ENCODE measurements at regions of chr10 and their contacts with region 1.

Region 1: DNA sequence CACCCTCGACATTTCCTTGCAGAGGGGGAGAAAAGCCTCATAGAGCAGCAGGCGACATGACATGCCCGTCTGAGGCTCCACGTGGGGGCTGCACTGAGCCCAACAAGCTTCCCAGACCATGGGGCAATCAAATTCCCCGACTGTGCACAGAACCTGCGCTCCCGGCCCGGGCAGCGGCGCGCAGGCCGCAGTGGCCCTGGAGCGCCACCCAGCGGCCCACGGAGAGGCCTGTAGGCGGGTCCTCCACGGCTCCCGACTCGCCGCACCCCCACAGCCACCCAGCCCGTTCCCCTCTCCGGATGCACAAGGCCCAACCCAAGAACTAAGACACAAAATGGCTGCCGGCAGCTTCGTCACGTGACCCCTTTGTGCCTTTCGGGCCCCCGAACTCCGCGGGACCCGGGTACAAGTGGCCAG is 816 bp downstream of the EPC1 start:
- DNase-seq: peak; percentile 97 to 98 (median 97)
- ATAC-seq: peak; percentile 96 to 98 (median 97)
- H3K4me3 ChIP-seq: peak overlapping the region; percentile 64 to 100 (median 88)
- H3K27ac ChIP-seq: peak overlapping the region; percentile 98 to 100 (median 100)
- H3K4me1 ChIP-seq: peaks cover 3 to 73% (median 55%) of the 10 kb centered on the region in 12 donors
- H3K27me3 ChIP-seq: no peaks in the 10 kb centered on the region
- CTCF ChIP-seq: peak; percentile 96 to 99 (median 98)
- POLR2A ChIP-seq: no peak

Region 2: GRCh38 chr10:32055813-32056600 is 290.1 kb before region 1 on chr10 and contains the start of gene KIF5B:
- intact Hi-C with region 1: loop called in 1 of 10 experiments (anchors 10 kb)
- DNase-seq: peak; percentile 90 to 97 (median 92)
- ATAC-seq: peak; percentile 83 to 96 (median 94)
- H3K4me3 ChIP-seq: peak within 1 kb of the TSS; percentile 61 to 95 (median 89)
- H3K27ac ChIP-seq: peak within 1 kb of the TSS; percentile 93 to 100 (median 98)
- H3K4me1 ChIP-seq: peaks cover 0 to 46% (median 32%) of the 10 kb centered on the region in 12 donors
- H3K27me3 ChIP-seq: no peaks in the 10 kb centered on the region
- CTCF ChIP-seq: peak in 3 of 12 donors; percentile 7 to 14 (median 8)
- POLR2A ChIP-seq: peak; percentile 91 to 97
- total RNA-seq, gene KIF5B: 108 to 178 (median 150) TPM

Region 3: DNA sequence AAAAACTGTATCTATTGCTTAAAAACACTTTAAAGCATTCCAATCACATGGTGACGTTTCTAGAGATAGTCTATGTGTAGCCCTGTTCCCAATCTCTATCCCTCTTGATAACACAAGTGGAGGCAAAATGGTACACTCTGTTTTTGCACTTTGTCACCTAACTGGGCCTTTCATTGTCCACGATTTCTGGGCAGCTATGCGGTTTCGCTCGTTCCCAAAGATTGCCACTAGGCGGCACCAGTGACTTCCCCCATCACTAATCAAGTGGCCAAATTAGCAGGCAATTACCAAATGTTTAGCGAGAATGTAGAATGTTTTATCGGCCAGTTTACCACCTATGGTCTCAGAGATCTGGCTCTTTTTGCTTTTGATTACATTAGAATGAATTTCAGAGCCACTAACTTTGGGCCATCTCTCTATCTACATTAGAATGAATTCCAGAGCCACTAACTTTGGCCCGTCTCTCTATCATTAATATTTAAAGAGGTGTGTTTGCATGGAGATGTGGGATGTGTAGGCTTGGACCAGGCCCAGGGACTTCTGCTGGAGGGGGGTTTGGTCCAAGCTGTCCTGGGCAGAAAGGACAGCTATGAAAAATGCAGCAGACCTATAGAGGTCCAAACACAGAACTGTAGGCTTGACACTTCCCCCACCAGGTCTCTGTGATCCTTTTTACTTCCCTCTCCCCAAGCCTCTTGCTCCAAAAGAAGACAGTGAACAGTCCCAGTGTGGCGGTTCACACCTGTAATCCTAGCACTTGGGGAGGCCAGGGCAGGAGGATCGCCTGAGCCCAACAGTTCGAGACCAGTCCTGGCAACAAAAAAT is 89.3 kb before region 1 on chr10:
- intact Hi-C with region 1: loop called (anchors 1 to 5 kb)
- DNase-seq: peak; percentile 44 to 76 (median 58)
- ATAC-seq: peak; percentile 37 to 83 (median 68)
- H3K4me3 ChIP-seq: peak overlapping the region in 1 of 12 donors; percentile 20
- H3K27ac ChIP-seq: no peak overlapping the region
- H3K4me1 ChIP-seq: peaks cover 0 to 8% (median 0%) of the 10 kb centered on the region in 12 donors
- H3K27me3 ChIP-seq: no peaks in the 10 kb centered on the region
- CTCF ChIP-seq: peak; percentile 83 to 94 (median 87)
- POLR2A ChIP-seq: no peak

Region 4: GRCh38 chr10:32308027-32308603 is 38.0 kb before region 1 on chr10:
- intact Hi-C with region 1: loop called in 2 of 10 experiments (anchors 5 kb)
- DNase-seq: no peak
- ATAC-seq: no peak
- H3K4me3 ChIP-seq: no peak overlapping the region
- H3K27ac ChIP-seq: no peak overlapping the region
- H3K4me1 ChIP-seq: peaks cover 7 to 71% (median 49%) of the 10 kb centered on the region in 12 donors
- H3K27me3 ChIP-seq: no peaks in the 10 kb centered on the region
- CTCF ChIP-seq: no peak
- POLR2A ChIP-seq: no peak

Region 5: GRCh38 chr10:32367793-32368453 is 21.8 kb after region 1 on chr10:
- intact Hi-C with region 1: loop called in 2 of 10 experiments (anchors 2 kb)
- DNase-seq: peak; percentile 62 to 80 (median 69)
- ATAC-seq: peak in 3 of 4 donors; percentile 38 to 53 (median 40)
- H3K4me3 ChIP-seq: peak overlapping the region in 7 of 12 donors; percentile 3 to 43 (median 26)
- H3K27ac ChIP-seq: peak overlapping the region in 7 of 12 donors; percentile 13 to 73 (median 28)
- H3K4me1 ChIP-seq: peaks cover 0 to 64% (median 33%) of the 10 kb centered on the region in 12 donors
- H3K27me3 ChIP-seq: no peaks in the 10 kb centered on the region
- CTCF ChIP-seq: peak; percentile 66 to 88 (median 80)
- POLR2A ChIP-seq: no peak

Region 6: GRCh38 chr10:32445740-32446535 is 99.8 kb after region 1 on chr10 and contains the start of gene CCDC7:
- intact Hi-C with region 1: loop called in 1 of 10 experiments (anchors 1 kb)
- DNase-seq: peak; percentile 87 to 93 (median 89)
- ATAC-seq: peak; percentile 92 to 99 (median 98)
- H3K4me3 ChIP-seq: peak within 1 kb of the TSS; percentile 43 to 91 (median 70)
- H3K27ac ChIP-seq: peak within 1 kb of the TSS; percentile 89 to 99 (median 96)
- H3K4me1 ChIP-seq: peaks cover 0 to 17% (median 2%) of the 10 kb centered on the region in 12 donors
- H3K27me3 ChIP-seq: no peaks in the 10 kb centered on the region
- CTCF ChIP-seq: peak; percentile 31 to 83 (median 62)
- POLR2A ChIP-seq: peak in 1 of 2 donors; percentile 62
- total RNA-seq, gene CCDC7: 6.6 to 41.3 (median 24.9) TPM